Posterior vena cava (tissue), 2 donors: ENCODE measurements at regions of chr11 and their contacts with region 1.

Region 1: GRCh38 chr11:131077340-131077739 is 161.1 kb upstream of the SNX19 start:
- DNase-seq: no peak

Region 2: GRCh38 chr11:129375751-129376657 is 1701.3 kb before region 1 on chr11 and contains the start of gene BARX2:
- intact Hi-C with region 1: no loop called
- DNase-seq: no peak
- total RNA-seq, gene BARX2: not detected

Region 3: DNA sequence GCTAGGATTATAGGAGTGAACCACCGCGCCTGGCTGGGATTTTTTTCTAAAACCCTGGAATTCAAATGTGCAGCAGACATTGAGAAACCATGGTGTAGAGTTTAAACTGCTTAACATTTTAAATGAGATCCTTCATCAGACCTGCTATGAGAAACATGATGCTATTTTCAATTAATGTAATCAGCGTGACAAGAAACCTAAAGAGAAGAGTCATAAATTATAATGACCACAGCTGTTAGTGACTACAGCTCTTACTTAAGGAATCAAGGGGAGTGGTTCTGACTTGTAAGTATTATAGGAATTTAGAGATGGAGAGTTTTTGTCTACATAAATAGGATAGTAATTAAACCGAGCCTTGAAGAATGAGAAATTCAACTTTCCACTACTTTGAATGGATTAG is 1531.1 kb before region 1 on chr11:
- intact Hi-C with region 1: loop called in 1 of 2 experiments (anchors 10 kb)
- DNase-seq: no peak